ENCODE measurements at regions of chr20 and their contacts with region 1.

Region 1: DNA sequence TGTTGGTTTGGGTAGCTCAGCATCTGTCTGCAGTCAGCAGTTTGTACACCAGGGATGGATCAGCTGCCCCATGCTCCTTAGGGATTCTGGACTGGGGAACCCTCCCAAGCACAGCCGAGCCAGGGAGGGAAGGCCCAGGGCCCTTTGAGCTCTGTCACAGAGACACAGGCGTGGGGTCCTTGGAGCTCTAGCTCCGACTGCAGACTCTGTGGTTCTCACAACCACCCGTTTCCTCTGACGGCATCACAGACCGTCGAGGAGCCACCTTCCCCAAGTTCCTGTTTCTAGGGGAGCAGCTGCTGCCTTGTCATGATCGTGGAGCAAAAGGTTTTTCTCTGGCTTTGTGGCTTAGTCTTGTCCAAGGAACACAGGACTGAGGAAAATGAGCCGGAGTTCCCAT is at the start of gene SLA2:
- DNase-seq: peak; percentile 36 to 75 (median 67)
- ATAC-seq: peak; percentile 92
- H3K4me3 ChIP-seq: peak within 1 kb of the TSS; percentile 82
- H3K4me3 Mint-ChIP-seq: peak within 1 kb of the TSS; percentile 93 to 100 (median 99)
- H3K27ac ChIP-seq: peak within 1 kb of the TSS; percentile 85
- H3K27ac Mint-ChIP-seq: peak within 1 kb of the TSS; percentile 94 to 99 (median 97)
- H3K4me1 ChIP-seq: peaks cover 30 to 35% of the 10 kb centered on the region in 2 donors
- H3K4me1 Mint-ChIP-seq: peaks cover 31 to 67% (median 58%) of the 10 kb centered on the region in 7 donors
- H3K27me3 ChIP-seq: no peaks in the 10 kb centered on the region
- H3K27me3 Mint-ChIP-seq: no peaks in the 10 kb centered on the region
- total RNA-seq, gene SLA2: 28.3 to 80.7 (median 29.7) TPM

Region 2: GRCh38 chr20:36573103-36573794 is 72.7 kb before region 1 on chr20 and contains the start of gene TGIF2:
- CTCF ChIA-PET with region 1: no interaction called
- POLR2A ChIA-PET with region 1: interaction called, 7 read pairs
- intact Hi-C with region 1: loop called in 1 of 2 experiments (anchors 1 kb)
- DNase-seq: peak; percentile 86 to 93 (median 91)
- ATAC-seq: peak; percentile 84
- H3K4me3 ChIP-seq: peak within 1 kb of the TSS; percentile 70
- H3K4me3 Mint-ChIP-seq: peak within 1 kb of the TSS; percentile 88 to 97 (median 92)
- H3K27ac ChIP-seq: peak within 1 kb of the TSS; percentile 100
- H3K27ac Mint-ChIP-seq: peak within 1 kb of the TSS; percentile 96 to 100 (median 99)
- H3K4me1 ChIP-seq: peaks cover 13 to 34% of the 10 kb centered on the region in 2 donors
- H3K4me1 Mint-ChIP-seq: peaks cover 27 to 49% (median 40%) of the 10 kb centered on the region in 7 donors
- H3K27me3 ChIP-seq: no peaks in the 10 kb centered on the region
- H3K27me3 Mint-ChIP-seq: no peaks in the 10 kb centered on the region
- total RNA-seq, gene TGIF2: 35.6 to 44.3 (median 40.7) TPM

Region 3: GRCh38 chr20:36624068-36624943 is 21.7 kb before region 1 on chr20:
- CTCF ChIA-PET with region 1: interaction called, 15 read pairs
- POLR2A ChIA-PET with region 1: interaction called, 74 read pairs
- intact Hi-C with region 1: no loop called
- DNase-seq: no peak
- ATAC-seq: no peak
- H3K4me3 ChIP-seq: no peak overlapping the region
- H3K4me3 Mint-ChIP-seq: peak overlapping the region in 2 of 10 donors; percentile 2 to 10
- H3K27ac ChIP-seq: peak overlapping the region; percentile 23
- H3K27ac Mint-ChIP-seq: peak overlapping the region; percentile 56 to 95 (median 76)
- H3K4me1 ChIP-seq: peaks cover 11 to 18% of the 10 kb centered on the region in 2 donors
- H3K4me1 Mint-ChIP-seq: peaks cover 18 to 50% (median 44%) of the 10 kb centered on the region in 7 donors
- H3K27me3 ChIP-seq: no peaks in the 10 kb centered on the region
- H3K27me3 Mint-ChIP-seq: no peaks in the 10 kb centered on the region

Region 4: DNA sequence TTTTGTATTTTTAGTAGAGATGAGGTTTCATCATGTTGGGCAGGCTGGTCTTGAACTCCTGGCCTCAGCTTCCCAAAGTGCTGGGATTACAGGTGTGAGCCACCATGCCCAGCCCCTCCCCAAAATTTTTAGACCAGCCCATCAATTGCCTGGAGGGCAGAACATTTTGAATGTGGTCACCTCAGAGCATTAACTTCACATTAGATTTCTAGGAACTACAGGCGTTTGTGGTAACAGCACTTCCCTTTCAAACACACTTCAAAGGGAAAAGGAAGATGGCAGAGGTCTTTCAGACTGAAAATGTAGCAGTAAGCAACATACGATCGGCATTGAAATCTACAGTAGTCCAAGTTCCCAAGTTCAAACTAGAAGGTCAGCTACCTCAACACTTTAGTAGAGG is 12.3 kb after region 1 on chr20:
- CTCF ChIA-PET with region 1: interaction called, 8 read pairs
- POLR2A ChIA-PET with region 1: interaction called, 5 read pairs
- intact Hi-C with region 1: loop called (anchors 1 to 2 kb)
- DNase-seq: peak in 7 of 9 donors; percentile 22 to 50 (median 45)
- ATAC-seq: peak; percentile 65
- H3K4me3 ChIP-seq: peak overlapping the region; percentile 55
- H3K4me3 Mint-ChIP-seq: peak overlapping the region; percentile 42 to 87 (median 76)
- H3K27ac ChIP-seq: no peak overlapping the region
- H3K27ac Mint-ChIP-seq: peak overlapping the region; percentile 19 to 81 (median 69)
- H3K4me1 ChIP-seq: peaks cover 15 to 20% of the 10 kb centered on the region in 2 donors
- H3K4me1 Mint-ChIP-seq: peaks cover 14 to 35% (median 23%) of the 10 kb centered on the region in 7 donors
- H3K27me3 ChIP-seq: no peaks in the 10 kb centered on the region
- H3K27me3 Mint-ChIP-seq: no peaks in the 10 kb centered on the region

Region 5: GRCh38 chr20:36728986-36729385 is 83.0 kb after region 1 on chr20:
- CTCF ChIA-PET with region 1: no interaction called
- POLR2A ChIA-PET with region 1: no interaction called
- intact Hi-C with region 1: no loop called
- DNase-seq: no peak
- ATAC-seq: peak; percentile 29
- H3K4me3 ChIP-seq: no peak overlapping the region
- H3K4me3 Mint-ChIP-seq: no peak overlapping the region
- H3K27ac ChIP-seq: no peak overlapping the region
- H3K27ac Mint-ChIP-seq: peak overlapping the region in 1 of 9 donors; percentile 36
- H3K4me1 ChIP-seq: peaks cover 0 to 7% of the 10 kb centered on the region in 2 donors
- H3K4me1 Mint-ChIP-seq: peaks cover 12 to 26% (median 19%) of the 10 kb centered on the region in 7 donors
- H3K27me3 ChIP-seq: no peaks in the 10 kb centered on the region
- H3K27me3 Mint-ChIP-seq: no peaks in the 10 kb centered on the region

Measured in naive thymus-derived CD4-positive, alpha-beta T cell (primary cell).